Pancreas (tissue), 10 donors: ENCODE measurements at regions of chr6 and their contacts with region 1.

Region 1: DNA sequence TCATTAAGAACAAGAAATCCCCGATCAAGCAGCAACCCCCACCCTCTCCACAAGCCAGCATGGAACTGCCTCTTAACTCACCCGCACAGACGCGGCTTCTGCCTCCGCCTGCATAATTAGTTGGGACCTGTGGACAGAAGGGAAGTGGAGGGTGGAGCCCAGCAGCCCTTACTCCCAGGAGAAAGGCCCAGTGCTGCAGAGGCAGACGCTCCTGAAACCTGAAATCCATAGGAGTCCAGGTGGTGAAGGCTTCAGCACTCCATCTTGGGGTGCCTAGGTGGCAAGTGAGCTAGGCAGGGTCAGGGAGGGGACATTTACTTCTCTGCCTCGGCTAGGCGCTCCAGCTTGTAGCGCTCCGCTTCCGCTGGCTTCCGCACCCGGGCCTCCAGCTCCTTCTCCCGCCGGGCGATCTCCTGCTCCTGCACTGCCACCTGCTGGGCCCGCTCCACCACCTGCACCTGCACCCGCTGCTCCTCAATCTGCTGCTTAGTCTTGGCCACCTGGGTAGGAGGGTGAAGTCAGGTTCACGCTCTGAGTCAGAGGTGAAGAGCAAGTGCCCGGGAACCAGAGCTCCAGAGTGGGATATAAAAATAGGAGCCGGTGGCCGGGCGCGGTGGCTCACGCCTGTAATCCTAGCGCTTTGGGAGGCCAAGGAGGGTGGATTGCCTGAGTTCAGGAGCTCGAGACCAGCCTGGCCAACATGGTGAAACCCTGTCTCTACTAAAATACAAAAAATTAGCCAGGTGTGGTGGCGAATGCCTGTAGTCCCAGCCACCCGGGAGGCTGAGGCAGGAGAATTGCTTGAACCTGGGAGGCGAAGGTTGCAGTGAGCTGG is 10.7 kb downstream of the TUBB start:
- DNase-seq: peak; percentile 82 to 97 (median 90)
- ATAC-seq: peak; percentile 95 to 99 (median 97)
- H3K4me3 ChIP-seq: peak overlapping the region in 2 of 4 donors; percentile 18 to 34
- H3K27ac ChIP-seq: peak overlapping the region in 1 of 4 donors; percentile 25
- H3K4me1 ChIP-seq: peaks cover 0 to 7% (median 3%) of the 10 kb centered on the region in 3 donors
- H3K27me3 ChIP-seq: no peaks in the 10 kb centered on the region
- CTCF ChIP-seq: peak; percentile 61 to 73 (median 66)

Region 2: GRCh38 chr6:30682143-30683117 is 48.4 kb before region 1 on chr6:
- intact Hi-C with region 1: loop called in 1 of 3 experiments (anchors 5 kb)
- DNase-seq: peak in 5 of 6 donors; percentile 45 to 75 (median 66)
- ATAC-seq: peak in 3 of 4 donors; percentile 11 to 30 (median 11)
- H3K4me3 ChIP-seq: peak overlapping the region in 3 of 4 donors; percentile 18 to 78 (median 65)
- H3K27ac ChIP-seq: peak overlapping the region; percentile 34 to 93 (median 64)
- H3K4me1 ChIP-seq: no peaks in the 10 kb centered on the region
- H3K27me3 ChIP-seq: no peaks in the 10 kb centered on the region
- CTCF ChIP-seq: no peak

Region 3: DNA sequence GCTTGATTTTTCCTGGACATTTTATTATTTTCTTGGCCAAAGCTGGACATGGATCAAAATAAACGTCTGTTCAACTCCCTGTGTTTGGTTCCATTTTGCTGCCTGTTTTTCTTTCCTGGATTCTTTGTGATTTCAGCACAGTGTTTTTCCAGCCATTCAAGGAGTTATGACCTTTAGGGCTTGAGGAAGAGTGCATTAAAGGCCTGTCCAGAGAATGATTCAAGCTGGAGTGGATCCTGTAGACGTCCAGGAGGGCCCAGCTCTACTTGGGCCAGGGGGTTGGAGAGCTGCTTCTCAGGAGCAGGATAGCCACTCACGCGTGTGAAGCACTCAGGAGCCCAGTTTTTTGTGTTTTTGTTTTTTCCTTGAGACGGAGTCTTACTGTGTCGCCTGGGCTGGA is 70.1 kb after region 1 on chr6:
- intact Hi-C with region 1: no loop called
- DNase-seq: no peak
- ATAC-seq: peak in 1 of 4 donors; percentile 30
- H3K4me3 ChIP-seq: no peak overlapping the region
- H3K27ac ChIP-seq: no peak overlapping the region
- H3K4me1 ChIP-seq: no peaks in the 10 kb centered on the region
- H3K27me3 ChIP-seq: no peaks in the 10 kb centered on the region
- CTCF ChIP-seq: no peak

Region 4: GRCh38 chr6:30883685-30884520 is 153.1 kb after region 1 on chr6 and contains the start of gene DDR1:
- intact Hi-C with region 1: loop called in 1 of 3 experiments (anchors 10 kb)
- DNase-seq: peak; percentile 75 to 91 (median 88)
- ATAC-seq: peak; percentile 61 to 69 (median 64)
- H3K4me3 ChIP-seq: peak within 1 kb of the TSS; percentile 69 to 75 (median 73)
- H3K27ac ChIP-seq: peak within 1 kb of the TSS; percentile 79 to 96 (median 89)
- H3K4me1 ChIP-seq: peaks cover 15 to 27% (median 20%) of the 10 kb centered on the region in 3 donors
- H3K27me3 ChIP-seq: no peaks in the 10 kb centered on the region
- CTCF ChIP-seq: no peak
- total RNA-seq, gene DDR1: 92.7 to 160 (median 118) TPM